ENCODE measurements at regions of chr17 and their contacts with region 1.

Region 1: DNA sequence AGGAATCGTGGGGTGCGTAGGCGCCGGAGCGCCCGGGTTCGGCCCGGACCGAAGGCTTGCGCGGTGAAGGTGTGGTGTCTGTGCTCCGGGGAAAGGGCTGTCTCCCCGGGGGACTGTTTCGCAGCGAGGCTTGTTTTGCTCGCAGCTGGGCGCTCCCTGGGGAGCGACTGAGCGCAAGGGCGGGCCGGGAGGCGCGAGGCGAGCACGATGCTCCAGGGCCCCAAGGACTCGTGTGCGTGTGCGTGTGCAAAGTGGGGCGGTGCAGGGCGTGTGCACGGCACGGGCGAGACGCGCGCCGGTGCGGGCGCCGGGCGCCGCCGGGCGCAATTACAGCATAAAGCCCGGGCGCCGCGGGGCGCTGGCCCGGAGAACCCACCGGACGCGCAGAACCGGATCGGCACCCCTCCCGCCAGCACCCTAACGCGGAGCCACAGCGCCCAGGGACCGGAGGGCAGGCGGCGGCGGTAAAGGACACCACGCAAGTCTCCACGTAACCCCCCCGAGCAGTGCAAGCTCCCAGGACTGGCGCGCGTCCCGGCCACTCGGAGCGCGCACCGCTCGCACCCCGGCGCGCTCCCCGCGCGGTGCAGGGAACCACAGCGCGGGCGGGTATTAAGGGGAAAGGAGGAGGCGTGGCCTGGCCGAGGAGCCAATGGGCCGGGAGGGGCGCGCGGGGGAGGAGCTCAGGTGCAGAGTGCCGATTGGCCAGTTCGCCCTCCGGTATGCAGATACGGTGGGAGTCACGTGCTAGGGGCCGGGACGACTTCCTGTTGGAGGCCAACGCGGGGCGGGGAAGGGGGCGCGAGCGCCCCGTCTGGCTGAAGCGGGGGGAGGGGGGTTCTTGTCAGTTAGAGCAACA is at the start of gene TNRC6C:
- DNase-seq: peak; percentile 99 to 100 (median 100)
- ATAC-seq: peak; percentile 86
- H3K4me3 ChIP-seq: peak within 1 kb of the TSS; percentile 74 to 81
- H3K4me3 Mint-ChIP-seq: peak within 1 kb of the TSS; percentile 97
- H3K27ac ChIP-seq: peak within 1 kb of the TSS; percentile 57 to 79
- H3K27ac Mint-ChIP-seq: peak within 1 kb of the TSS; percentile 97
- H3K4me1 ChIP-seq: peaks cover 37% of the 10 kb centered on the region
- H3K4me1 Mint-ChIP-seq: peaks cover 38% of the 10 kb centered on the region
- H3K27me3 ChIP-seq: no peaks in the 10 kb centered on the region
- H3K27me3 Mint-ChIP-seq: no peaks in the 10 kb centered on the region
- CTCF ChIP-seq: no peak
- total RNA-seq, gene TNRC6C: 49.3 to 53.8 TPM

Region 2: DNA sequence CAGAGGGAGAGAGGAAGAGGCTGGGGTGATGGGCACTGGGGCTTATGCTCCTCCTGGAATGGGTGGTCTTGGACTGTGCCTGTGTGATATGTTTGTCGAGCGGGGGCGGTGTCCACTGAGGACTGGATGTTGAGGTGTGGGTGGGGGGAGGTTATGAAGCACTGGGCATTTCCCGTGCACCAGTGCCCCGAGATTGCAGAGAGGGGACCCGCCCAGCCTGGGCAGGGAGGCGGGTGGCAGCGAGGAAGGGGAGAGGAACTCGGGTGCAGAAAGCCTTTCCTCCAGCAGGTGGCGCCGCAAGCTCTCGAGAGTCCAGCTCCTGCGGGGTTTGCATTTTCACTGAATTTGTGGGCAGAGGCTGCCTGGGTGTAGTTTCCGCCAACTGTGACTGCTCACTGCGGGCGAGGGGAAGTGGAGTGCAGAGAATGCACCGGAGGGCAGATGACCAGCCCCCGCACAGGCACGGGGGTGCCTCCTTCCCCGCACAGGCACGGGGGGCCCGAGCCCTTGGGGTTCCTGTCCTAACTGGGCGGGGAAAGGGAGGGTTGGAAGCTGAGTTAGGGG is 626.7 kb before region 1 on chr17:
- CTCF ChIA-PET with region 1: no interaction called
- POLR2A ChIA-PET with region 1: interaction called, 3 read pairs
- intact Hi-C with region 1: loop called in 1 of 2 experiments (anchors 5 kb)
- DNase-seq: peak; percentile 90 to 99 (median 96)
- ATAC-seq: peak; percentile 79
- H3K4me3 ChIP-seq: peak overlapping the region; percentile 10 to 42
- H3K4me3 Mint-ChIP-seq: peak overlapping the region; percentile 79
- H3K27ac ChIP-seq: peak overlapping the region; percentile 32 to 56
- H3K27ac Mint-ChIP-seq: peak overlapping the region; percentile 90
- H3K4me1 ChIP-seq: peaks cover 41% of the 10 kb centered on the region
- H3K4me1 Mint-ChIP-seq: peaks cover 46% of the 10 kb centered on the region
- H3K27me3 ChIP-seq: no peaks in the 10 kb centered on the region
- H3K27me3 Mint-ChIP-seq: no peaks in the 10 kb centered on the region
- CTCF ChIP-seq: peak; percentile 87

Region 3: DNA sequence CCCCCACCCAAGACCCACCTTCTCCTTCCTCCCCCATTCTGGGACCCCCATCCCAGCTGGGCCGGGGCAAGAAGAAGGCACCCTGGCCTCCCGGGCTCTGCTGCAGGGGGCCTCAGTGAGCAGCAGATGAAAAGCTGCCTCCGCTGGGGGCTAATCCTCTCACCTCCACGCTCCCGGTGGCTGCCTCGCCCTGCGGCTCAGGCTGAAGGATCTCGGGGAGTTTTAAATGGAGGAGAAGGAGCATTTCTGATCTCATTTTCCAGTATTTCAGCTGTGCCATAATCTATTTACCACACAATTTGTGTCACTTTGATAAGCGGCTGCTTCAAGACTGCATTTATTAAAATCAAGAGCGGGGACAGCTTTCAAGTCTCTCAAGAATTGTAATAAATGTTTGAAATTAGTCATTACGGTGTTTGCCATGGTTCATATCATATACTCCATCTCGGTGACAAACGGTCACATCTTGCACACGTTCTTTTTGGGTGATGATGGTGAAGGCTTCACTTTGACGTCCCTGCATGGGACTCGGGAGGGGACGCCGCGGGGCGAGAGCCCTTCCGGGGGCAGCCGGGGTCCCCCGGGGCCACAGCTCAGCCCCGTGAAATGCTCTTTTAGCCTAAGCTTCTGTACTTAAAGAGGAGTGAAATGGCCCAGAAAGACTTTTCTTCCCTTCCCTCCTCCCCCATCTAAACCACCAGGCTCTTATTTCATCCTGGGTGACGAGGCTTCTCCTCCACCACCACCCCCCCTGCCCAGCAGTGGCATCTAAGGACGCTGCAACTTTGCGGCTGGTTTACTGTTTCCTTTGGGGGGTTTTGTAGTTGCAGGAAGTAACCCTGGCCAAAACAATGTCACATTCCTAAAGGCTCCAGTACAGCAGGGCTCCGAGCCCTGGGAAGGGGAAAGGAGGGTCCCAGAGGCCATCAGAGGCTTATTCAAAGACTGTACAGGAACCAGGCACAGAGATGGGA is 312.7 kb before region 1 on chr17:
- CTCF ChIA-PET with region 1: interaction called, 5 read pairs
- POLR2A ChIA-PET with region 1: interaction called, 21 read pairs
- intact Hi-C with region 1: no loop called
- DNase-seq: peak; percentile 26 to 84 (median 72)
- ATAC-seq: peak; percentile 86
- H3K4me3 ChIP-seq: peak overlapping the region; percentile 46 to 48
- H3K4me3 Mint-ChIP-seq: peak overlapping the region; percentile 82
- H3K27ac ChIP-seq: peak overlapping the region; percentile 24 to 33
- H3K27ac Mint-ChIP-seq: peak overlapping the region; percentile 92
- H3K4me1 ChIP-seq: peaks cover 22% of the 10 kb centered on the region
- H3K4me1 Mint-ChIP-seq: peaks cover 24% of the 10 kb centered on the region
- H3K27me3 ChIP-seq: no peaks in the 10 kb centered on the region
- H3K27me3 Mint-ChIP-seq: no peaks in the 10 kb centered on the region
- CTCF ChIP-seq: peak; percentile 54

Region 4: GRCh38 chr17:77842528-77843147 is 115.4 kb before region 1 on chr17:
- CTCF ChIA-PET with region 1: no interaction called
- POLR2A ChIA-PET with region 1: interaction called, 24 read pairs
- intact Hi-C with region 1: loop called (anchors 1 to 5 kb)
- DNase-seq: peak in 1 of 9 experiments; percentile 36
- ATAC-seq: no peak
- H3K4me3 ChIP-seq: no peak overlapping the region
- H3K4me3 Mint-ChIP-seq: no peak overlapping the region
- H3K27ac ChIP-seq: peak overlapping the region in 1 of 2 experiments; percentile 25
- H3K27ac Mint-ChIP-seq: peak overlapping the region; percentile 93
- H3K4me1 ChIP-seq: peaks cover 53% of the 10 kb centered on the region
- H3K4me1 Mint-ChIP-seq: peaks cover 64% of the 10 kb centered on the region
- H3K27me3 ChIP-seq: no peaks in the 10 kb centered on the region
- H3K27me3 Mint-ChIP-seq: no peaks in the 10 kb centered on the region
- CTCF ChIP-seq: no peak

Region 5: DNA sequence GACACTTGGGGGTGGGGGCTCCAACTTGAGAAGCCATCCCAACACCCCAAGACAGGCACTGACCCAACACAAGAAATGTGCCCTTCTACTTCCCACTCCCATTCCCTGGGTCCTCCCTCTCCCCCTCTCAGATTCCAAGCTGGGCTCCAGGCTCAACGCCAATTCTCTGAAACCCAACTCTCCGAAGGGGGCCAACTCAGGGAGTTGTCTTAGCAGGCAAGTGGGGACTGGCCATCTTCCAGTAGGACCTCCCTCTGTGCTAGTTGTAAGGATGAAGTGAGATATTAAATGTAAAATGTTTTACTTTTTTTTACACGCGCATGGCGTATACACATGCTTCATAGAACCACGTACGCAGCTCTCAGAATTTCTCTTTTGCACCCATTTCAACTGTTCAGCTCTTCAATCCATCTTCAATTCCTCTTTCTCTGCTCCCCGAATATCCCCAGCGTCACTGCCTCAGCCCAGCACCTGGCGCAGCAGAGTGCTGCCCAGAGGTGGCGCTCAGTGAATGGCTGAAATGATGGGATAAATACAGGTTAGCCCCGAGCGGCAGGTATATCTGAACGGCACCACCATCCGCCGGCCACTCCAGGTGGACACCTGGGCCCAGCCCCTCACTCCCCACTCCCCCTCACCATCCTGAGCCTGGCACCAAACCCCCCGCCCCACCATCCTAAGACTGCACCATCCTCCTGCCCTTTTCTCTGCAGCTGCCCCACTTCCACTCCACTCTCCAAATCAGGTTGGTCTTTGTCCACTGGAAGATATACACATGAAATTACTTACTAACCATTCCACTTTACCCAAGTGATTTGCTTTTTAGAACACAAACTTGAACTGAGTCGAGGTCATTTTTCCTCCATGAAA is 43.5 kb before region 1 on chr17:
- CTCF ChIA-PET with region 1: interaction called, 3 read pairs
- POLR2A ChIA-PET with region 1: interaction called, 13 read pairs
- intact Hi-C with region 1: no loop called
- DNase-seq: peak in 1 of 9 experiments; percentile 31
- ATAC-seq: no peak
- H3K4me3 ChIP-seq: no peak overlapping the region
- H3K4me3 Mint-ChIP-seq: no peak overlapping the region
- H3K27ac ChIP-seq: no peak overlapping the region
- H3K27ac Mint-ChIP-seq: no peak overlapping the region
- H3K4me1 ChIP-seq: peaks cover 8% of the 10 kb centered on the region
- H3K4me1 Mint-ChIP-seq: peaks cover 17% of the 10 kb centered on the region
- H3K27me3 ChIP-seq: peaks cover 4 to 5% of the 10 kb centered on the region in 2 experiments
- H3K27me3 Mint-ChIP-seq: peaks cover 29% of the 10 kb centered on the region
- CTCF ChIP-seq: no peak

Region 6: GRCh38 chr17:77974396-77974795 is 16.3 kb after region 1 on chr17:
- CTCF ChIA-PET with region 1: interaction called, 4 read pairs
- POLR2A ChIA-PET with region 1: interaction called, 24 read pairs
- intact Hi-C with region 1: no loop called
- DNase-seq: peak in 1 of 9 experiments; percentile 34
- ATAC-seq: peak; percentile 36
- H3K4me3 ChIP-seq: no peak overlapping the region
- H3K4me3 Mint-ChIP-seq: no peak overlapping the region
- H3K27ac ChIP-seq: no peak overlapping the region
- H3K27ac Mint-ChIP-seq: peak overlapping the region; percentile 0
- H3K4me1 ChIP-seq: peaks cover 57% of the 10 kb centered on the region
- H3K4me1 Mint-ChIP-seq: peaks cover 81% of the 10 kb centered on the region
- H3K27me3 ChIP-seq: no peaks in the 10 kb centered on the region
- H3K27me3 Mint-ChIP-seq: no peaks in the 10 kb centered on the region
- CTCF ChIP-seq: no peak